Activated CD8-positive, alpha-beta T cell treated with anti-CD3 and anti-CD28 coated beads for 36 hours (primary cell): ENCODE measurements at regions of chr6 and their contacts with region 1.

Region 1: GRCh38 chr6:156776840-156777576 is at the start of gene ARID1B:
- DNase-seq: peak; percentile 79
- ATAC-seq: peak; percentile 33
- H3K4me3 Mint-ChIP-seq: peak within 1 kb of the TSS; percentile 78
- H3K27ac Mint-ChIP-seq: peak within 1 kb of the TSS; percentile 94
- H3K4me1 Mint-ChIP-seq: peaks cover 21% of the 10 kb centered on the region
- H3K27me3 Mint-ChIP-seq: no peaks in the 10 kb centered on the region
- CTCF ChIP-seq: no peak
- total RNA-seq, gene ARID1B: 36.9 to 38.9 TPM

Region 2: DNA sequence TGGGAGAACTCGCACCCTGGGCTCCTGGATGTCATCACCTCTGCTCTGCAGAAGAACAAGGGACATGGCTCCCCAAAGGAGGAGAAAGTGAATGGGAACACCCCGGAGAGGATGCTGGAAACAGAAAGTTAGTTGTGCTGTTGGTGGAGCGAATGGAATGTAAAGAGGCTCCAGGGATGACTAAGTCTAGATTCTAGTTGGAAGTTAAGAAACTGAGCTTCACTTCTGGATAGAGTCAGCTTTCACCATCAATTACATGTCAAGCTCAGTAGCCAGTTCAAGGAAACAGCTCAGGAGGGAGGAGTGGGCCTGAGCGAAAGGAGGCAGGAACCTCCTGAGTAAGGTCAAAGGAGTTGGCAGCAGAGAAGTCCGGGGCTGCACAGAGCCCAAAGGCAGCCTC is 131.9 kb before region 1 on chr6:
- CTCF ChIA-PET with region 1: no interaction called
- POLR2A ChIA-PET with region 1: no interaction called
- intact Hi-C with region 1: no loop called
- DNase-seq: no peak
- ATAC-seq: no peak
- H3K4me3 Mint-ChIP-seq: no peak overlapping the region
- H3K27ac Mint-ChIP-seq: no peak overlapping the region
- H3K4me1 Mint-ChIP-seq: peaks cover 14% of the 10 kb centered on the region
- H3K27me3 Mint-ChIP-seq: peaks cover 27% of the 10 kb centered on the region
- CTCF ChIP-seq: no peak

Region 3: GRCh38 chr6:156686995-156687788 is 89.8 kb before region 1 on chr6:
- CTCF ChIA-PET with region 1: interaction called, 5 read pairs
- POLR2A ChIA-PET with region 1: interaction called, 5 read pairs
- intact Hi-C with region 1: loop called (anchors 2 kb)
- DNase-seq: peak; percentile 70
- ATAC-seq: peak; percentile 91
- H3K4me3 Mint-ChIP-seq: peak overlapping the region; percentile 89
- H3K27ac Mint-ChIP-seq: peak overlapping the region; percentile 89
- H3K4me1 Mint-ChIP-seq: peaks cover 20% of the 10 kb centered on the region
- H3K27me3 Mint-ChIP-seq: no peaks in the 10 kb centered on the region
- CTCF ChIP-seq: no peak

Region 4: DNA sequence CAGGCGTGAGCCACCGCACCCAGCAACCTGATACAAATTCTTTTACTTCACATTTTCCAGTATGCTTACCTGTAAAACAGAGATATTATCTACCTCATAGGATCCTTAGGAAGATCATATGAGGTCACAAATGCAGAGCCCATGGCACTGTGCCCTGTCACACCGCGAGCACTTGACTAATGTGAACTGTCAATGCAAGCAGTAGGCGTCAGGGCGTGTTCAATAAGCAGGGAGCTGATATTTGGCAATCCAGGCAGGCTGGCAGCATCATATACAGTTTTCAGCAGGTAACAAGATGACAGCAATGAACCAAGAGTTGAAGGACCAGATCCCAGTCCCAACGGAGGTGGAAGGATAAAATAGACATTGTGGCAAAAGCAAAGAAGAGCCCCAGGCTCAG is 14.5 kb before region 1 on chr6:
- CTCF ChIA-PET with region 1: no interaction called
- POLR2A ChIA-PET with region 1: no interaction called
- intact Hi-C with region 1: no loop called
- DNase-seq: no peak
- ATAC-seq: no peak
- H3K4me3 Mint-ChIP-seq: no peak overlapping the region
- H3K27ac Mint-ChIP-seq: no peak overlapping the region
- H3K4me1 Mint-ChIP-seq: no peaks in the 10 kb centered on the region
- H3K27me3 Mint-ChIP-seq: no peaks in the 10 kb centered on the region
- CTCF ChIP-seq: no peak

Region 5: GRCh38 chr6:156787569-156788492 is 10.8 kb after region 1 on chr6:
- CTCF ChIA-PET with region 1: interaction called, 3 read pairs
- POLR2A ChIA-PET with region 1: interaction called, 15 read pairs
- intact Hi-C with region 1: no loop called
- DNase-seq: no peak
- ATAC-seq: no peak
- H3K4me3 Mint-ChIP-seq: no peak overlapping the region
- H3K27ac Mint-ChIP-seq: peak overlapping the region; percentile 19
- H3K4me1 Mint-ChIP-seq: peaks cover 88% of the 10 kb centered on the region
- H3K27me3 Mint-ChIP-seq: no peaks in the 10 kb centered on the region
- CTCF ChIP-seq: no peak

Region 6: GRCh38 chr6:156857573-156857972 is 80.6 kb after region 1 on chr6:
- CTCF ChIA-PET with region 1: no interaction called
- POLR2A ChIA-PET with region 1: no interaction called
- intact Hi-C with region 1: loop called (anchors 5 kb)
- DNase-seq: peak; percentile 42
- ATAC-seq: peak; percentile 89
- H3K4me3 Mint-ChIP-seq: no peak overlapping the region
- H3K27ac Mint-ChIP-seq: peak overlapping the region; percentile 87
- H3K4me1 Mint-ChIP-seq: peaks cover 81% of the 10 kb centered on the region
- H3K27me3 Mint-ChIP-seq: no peaks in the 10 kb centered on the region
- CTCF ChIP-seq: no peak

Region 7: DNA sequence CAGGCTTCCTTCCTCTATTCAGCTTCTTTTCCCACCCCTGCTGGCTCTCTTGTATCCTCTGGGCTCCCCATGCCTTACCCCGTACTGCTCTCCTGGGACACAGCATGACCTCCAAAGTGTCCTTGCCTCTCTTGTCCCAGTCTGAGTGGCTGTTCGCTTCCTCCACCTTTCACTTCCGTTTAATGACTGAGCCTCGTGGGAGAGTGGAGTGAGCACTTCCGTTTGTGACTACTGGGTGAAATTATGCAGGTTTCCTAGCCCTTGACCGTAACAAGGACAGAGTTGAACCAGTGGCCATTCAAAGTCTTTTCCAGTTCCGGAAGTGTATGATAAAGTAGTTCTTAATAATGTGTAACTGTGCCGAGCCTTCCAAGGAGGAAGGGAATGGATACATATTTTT is 109.4 kb after region 1 on chr6:
- CTCF ChIA-PET with region 1: no interaction called
- POLR2A ChIA-PET with region 1: interaction called, 3 read pairs
- intact Hi-C with region 1: loop called (anchors 10 kb)
- DNase-seq: peak; percentile 27
- ATAC-seq: peak; percentile 37
- H3K4me3 Mint-ChIP-seq: peak overlapping the region; percentile 39
- H3K27ac Mint-ChIP-seq: peak overlapping the region; percentile 78
- H3K4me1 Mint-ChIP-seq: peaks cover 81% of the 10 kb centered on the region
- H3K27me3 Mint-ChIP-seq: no peaks in the 10 kb centered on the region
- CTCF ChIP-seq: no peak

Region 8: DNA sequence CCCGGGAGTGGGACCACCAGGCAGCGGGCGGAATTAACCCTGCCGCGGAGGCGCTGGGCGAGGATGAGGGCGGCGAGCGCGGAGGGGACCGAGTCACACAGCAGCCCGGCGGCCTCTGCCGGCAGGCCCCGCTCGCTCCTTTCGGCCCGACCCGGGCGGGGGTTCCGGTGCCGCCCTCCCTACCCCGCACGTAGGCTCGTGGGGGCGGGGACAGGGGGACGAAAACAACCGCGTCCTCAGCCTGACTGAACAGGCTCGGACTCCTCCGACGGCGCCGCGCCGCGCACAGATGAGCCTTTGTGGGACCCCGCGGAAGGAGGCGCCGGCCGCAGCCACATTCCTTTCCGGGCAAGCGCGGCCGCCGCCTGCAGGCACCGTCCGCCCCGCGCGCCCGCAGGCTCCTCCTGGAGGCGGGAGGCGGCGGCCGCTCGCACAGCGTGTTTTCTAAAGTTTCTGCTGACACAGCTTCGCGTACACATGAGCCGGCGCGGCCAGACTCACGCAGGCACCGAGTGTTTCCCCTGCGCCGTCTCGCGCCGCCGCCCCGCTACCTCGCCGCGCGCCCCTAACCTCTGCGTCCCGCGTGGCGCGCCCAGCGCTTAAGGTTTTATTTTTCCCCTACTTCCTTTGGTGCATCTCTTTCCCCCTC is 244.5 kb after region 1 on chr6:
- CTCF ChIA-PET with region 1: no interaction called
- POLR2A ChIA-PET with region 1: interaction called, 32 read pairs
- intact Hi-C with region 1: loop called (anchors 5 kb)
- DNase-seq: peak; percentile 92
- ATAC-seq: peak; percentile 82
- H3K4me3 Mint-ChIP-seq: peak overlapping the region; percentile 93
- H3K27ac Mint-ChIP-seq: peak overlapping the region; percentile 100
- H3K4me1 Mint-ChIP-seq: peaks cover 52% of the 10 kb centered on the region
- H3K27me3 Mint-ChIP-seq: no peaks in the 10 kb centered on the region
- CTCF ChIP-seq: peak; percentile 37